ENCODE measurements at regions of chr6 and their contacts with region 1.

Region 1: DNA sequence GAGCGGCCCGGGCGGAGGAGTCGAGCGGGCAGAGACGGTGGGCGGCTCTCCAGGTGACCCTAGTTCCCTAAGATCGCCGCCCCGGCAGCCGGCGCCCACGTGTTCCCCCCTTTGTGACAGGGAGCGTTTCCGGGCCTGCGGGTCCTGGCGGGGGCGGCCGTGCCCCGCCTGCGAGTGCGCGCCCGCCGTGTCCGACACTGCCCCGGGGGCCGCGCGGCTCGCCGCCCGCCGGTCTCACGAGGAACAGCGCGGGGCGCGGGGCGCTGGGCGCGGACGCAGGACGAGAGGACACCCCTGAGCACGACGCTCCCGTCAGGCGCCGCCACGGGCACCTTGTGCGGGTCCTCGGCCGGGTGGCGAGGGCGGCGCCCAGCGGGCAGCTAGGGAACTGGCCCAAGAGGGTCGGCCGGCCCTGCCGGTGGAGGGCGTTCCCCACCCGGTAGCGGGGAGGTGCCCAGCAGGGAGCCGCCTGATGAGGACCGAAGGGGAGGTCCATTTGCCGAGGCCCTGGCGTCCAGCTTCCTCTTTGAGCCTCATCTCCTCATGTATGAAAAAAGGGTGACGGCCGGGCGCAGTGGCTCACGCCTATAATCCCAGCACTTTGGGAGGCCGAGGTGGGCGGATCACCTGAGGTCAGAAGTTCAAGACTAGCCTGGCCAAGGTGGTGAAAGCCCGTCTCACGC is at the start of gene VARS1:
- DNase-seq: peak; percentile 90 to 92 (median 92)
- H3K4me3 ChIP-seq: peak within 1 kb of the TSS; percentile 73 to 98 (median 89)
- H3K27ac ChIP-seq: peak within 1 kb of the TSS; percentile 83 to 92
- H3K4me1 ChIP-seq: peaks cover 14 to 67% (median 51%) of the 10 kb centered on the region in 4 experiments
- H3K27me3 ChIP-seq: no peaks in the 10 kb centered on the region

Region 2: GRCh38 chr6:31158140-31158862 is 637.5 kb before region 1 on chr6 and contains the start of gene TCF19:
- CTCF ChIA-PET with region 1: no interaction called
- POLR2A ChIA-PET with region 1: no interaction called
- DNase-seq: peak; percentile 99 to 100 (median 99)
- H3K4me3 ChIP-seq: peak within 1 kb of the TSS; percentile 76 to 95 (median 85)
- H3K27ac ChIP-seq: peak within 1 kb of the TSS; percentile 40 to 86
- H3K4me1 ChIP-seq: peaks cover 2 to 23% (median 20%) of the 10 kb centered on the region in 4 experiments
- H3K27me3 ChIP-seq: no peaks in the 10 kb centered on the region

Region 3: GRCh38 chr6:31697555-31697954 is 98.2 kb before region 1 on chr6:
- CTCF ChIA-PET with region 1: no interaction called
- POLR2A ChIA-PET with region 1: no interaction called
- DNase-seq: no peak
- H3K4me3 ChIP-seq: no peak overlapping the region
- H3K27ac ChIP-seq: no peak overlapping the region
- H3K4me1 ChIP-seq: peaks cover 0 to 18% (median 10%) of the 10 kb centered on the region in 4 experiments
- H3K27me3 ChIP-seq: no peaks in the 10 kb centered on the region

Region 4: GRCh38 chr6:31806465-31807272 is 10.9 kb after region 1 on chr6 and contains the start of gene LSM2:
- CTCF ChIA-PET with region 1: interaction called, 18 read pairs
- POLR2A ChIA-PET with region 1: interaction called, 6 read pairs
- DNase-seq: peak; percentile 94 to 97 (median 97)
- H3K4me3 ChIP-seq: peak within 1 kb of the TSS; percentile 73 to 98 (median 95)
- H3K27ac ChIP-seq: peak within 1 kb of the TSS; percentile 85 to 94
- H3K4me1 ChIP-seq: peaks cover 6 to 15% (median 11%) of the 10 kb centered on the region in 4 experiments
- H3K27me3 ChIP-seq: no peaks in the 10 kb centered on the region

Region 5: GRCh38 chr6:31815025-31815838 is 19.5 kb after region 1 on chr6 and contains the starts of genes HSPA1A and HSPA1L:
- CTCF ChIA-PET with region 1: interaction called, 13 read pairs
- POLR2A ChIA-PET with region 1: interaction called, 4 read pairs
- DNase-seq: peak; percentile 86 to 91 (median 90)
- H3K4me3 ChIP-seq: peak within 1 kb of the TSS; percentile 69 to 98 (median 88)
- H3K27ac ChIP-seq: peak within 1 kb of the TSS; percentile 58 to 83
- H3K4me1 ChIP-seq: peaks cover 16 to 38% (median 27%) of the 10 kb centered on the region in 4 experiments
- H3K27me3 ChIP-seq: no peaks in the 10 kb centered on the region

Region 6: GRCh38 chr6:31827286-31828079 is 31.7 kb after region 1 on chr6 and contains the start of gene HSPA1B:
- CTCF ChIA-PET with region 1: interaction called, 11 read pairs
- POLR2A ChIA-PET with region 1: interaction called, 6 read pairs
- DNase-seq: peak; percentile 100
- H3K4me3 ChIP-seq: peak within 1 kb of the TSS; percentile 72 to 94 (median 83)
- H3K27ac ChIP-seq: peak within 1 kb of the TSS; percentile 88 to 96
- H3K4me1 ChIP-seq: peaks cover 19 to 58% (median 42%) of the 10 kb centered on the region in 4 experiments
- H3K27me3 ChIP-seq: no peaks in the 10 kb centered on the region